ENCODE measurements at regions of chr20 and their contacts with region 1.

Region 1: DNA sequence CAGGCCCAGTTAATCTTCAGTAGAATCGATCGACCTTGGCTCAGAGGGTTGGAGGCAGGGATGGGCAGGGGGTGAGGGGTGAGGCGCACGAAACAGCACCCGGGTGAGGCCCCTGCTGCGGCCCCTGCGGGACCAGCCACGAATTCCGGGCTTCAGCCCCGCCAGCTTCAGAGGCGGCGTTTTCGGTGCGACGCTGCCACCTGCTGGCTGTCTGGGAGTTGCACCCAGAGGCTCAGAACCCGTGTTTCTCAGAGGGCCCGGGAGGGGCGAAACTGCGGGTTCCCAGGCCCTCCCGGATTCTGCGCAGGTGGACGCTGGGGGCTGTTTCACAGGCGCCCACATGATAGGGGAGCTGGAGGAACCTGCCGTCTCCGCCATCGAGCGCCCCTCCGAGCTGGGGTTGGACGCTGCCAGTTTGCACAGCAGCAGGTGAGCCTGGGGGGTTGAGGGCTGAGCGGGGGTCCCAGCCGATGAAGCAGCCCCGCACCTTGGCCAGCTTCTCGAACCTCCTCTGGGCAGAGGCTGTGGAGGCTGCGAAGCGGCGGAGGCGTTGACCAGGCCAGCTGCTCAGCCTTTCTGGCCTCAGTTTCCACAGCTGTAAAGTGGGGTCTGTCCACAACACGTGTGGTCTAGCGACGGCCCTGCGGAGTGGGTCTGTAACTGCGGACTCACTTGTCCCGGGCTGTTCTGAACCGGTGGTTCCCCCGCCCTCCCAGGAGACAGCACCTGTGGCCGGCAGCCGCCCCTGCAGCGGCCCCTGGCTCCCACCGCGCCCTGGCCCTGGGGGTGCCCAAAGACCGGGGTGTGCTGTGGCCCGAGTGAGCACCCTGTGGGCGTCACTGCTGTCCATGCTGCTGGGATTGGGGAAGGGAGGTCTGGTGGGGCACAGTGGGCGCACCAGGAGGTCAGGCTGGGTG is 2.5 kb upstream of the BHLHE23 start:
- DNase-seq: peak; percentile 83
- ATAC-seq: peak; percentile 87

Region 2: GRCh38 chr20:62875419-62876361 is 133.6 kb before region 1 on chr20:
- intact Hi-C with region 1: loop called (anchors 10 kb)
- DNase-seq: peak; percentile 86
- ATAC-seq: peak; percentile 88

Region 3: DNA sequence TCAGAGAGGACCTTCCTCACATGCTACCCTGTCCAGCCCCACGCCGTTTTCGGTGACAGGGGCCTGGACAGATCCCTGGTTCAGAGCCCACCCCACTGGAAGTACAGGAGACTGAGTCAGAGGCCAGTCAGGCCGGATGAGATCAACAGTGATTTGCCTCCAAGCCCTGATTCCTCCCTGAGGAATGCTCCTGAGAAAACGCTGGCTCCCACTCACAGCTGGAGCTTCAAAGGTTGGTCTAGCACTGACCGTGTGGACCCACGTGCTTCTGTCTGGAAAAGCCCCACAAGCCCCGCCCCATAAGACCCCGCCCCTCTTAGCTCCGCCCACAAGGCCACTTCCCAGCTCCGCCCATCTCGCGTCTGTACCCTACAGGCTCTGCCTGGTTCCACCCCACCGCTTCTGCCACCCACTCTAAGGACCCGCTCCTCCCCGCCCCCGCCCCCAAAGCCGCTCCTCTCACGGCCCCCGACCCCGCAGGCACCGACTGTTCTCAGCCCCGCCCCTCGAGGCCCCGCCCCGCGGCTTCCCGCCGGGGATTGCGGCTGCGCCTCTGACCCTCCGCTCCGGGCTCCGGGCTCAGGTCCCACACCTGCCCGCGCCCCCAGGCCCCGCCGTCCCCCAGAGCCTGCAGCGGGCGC is 62.4 kb after region 1 on chr20:
- intact Hi-C with region 1: no loop called
- DNase-seq: peak; percentile 20
- ATAC-seq: no peak

Measured in left ventricle myocardium superior (tissue), 1 donor.